ENCODE measurements at regions of chr6 and their contacts with region 1.

Region 1: DNA sequence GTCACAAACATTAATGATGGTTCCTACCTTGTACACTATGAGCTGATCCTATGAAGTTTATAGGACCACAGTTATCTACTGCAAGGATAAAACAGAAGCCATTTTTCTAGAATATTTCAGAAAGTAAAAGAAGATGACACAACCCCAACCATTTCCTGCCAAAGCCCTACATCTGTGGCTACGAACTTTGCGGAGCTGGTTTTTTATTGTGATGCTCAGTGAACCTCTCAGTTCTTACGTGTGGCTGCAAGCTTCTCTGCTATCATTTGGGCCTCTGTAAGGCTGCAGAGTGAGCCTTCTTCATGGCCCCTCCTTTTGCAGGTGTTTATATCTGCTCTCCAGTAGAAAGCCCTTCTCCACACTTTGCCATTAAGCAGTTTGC is 17.8 kb upstream of the TAGAP start:
- DNase-seq: peak; percentile 73
- ATAC-seq: peak; percentile 77
- H3K4me3 Mint-ChIP-seq: peak overlapping the region; percentile 35
- H3K27ac Mint-ChIP-seq: peak overlapping the region; percentile 94
- H3K4me1 Mint-ChIP-seq: peaks cover 99% of the 10 kb centered on the region
- H3K27me3 Mint-ChIP-seq: no peaks in the 10 kb centered on the region

Region 2: DNA sequence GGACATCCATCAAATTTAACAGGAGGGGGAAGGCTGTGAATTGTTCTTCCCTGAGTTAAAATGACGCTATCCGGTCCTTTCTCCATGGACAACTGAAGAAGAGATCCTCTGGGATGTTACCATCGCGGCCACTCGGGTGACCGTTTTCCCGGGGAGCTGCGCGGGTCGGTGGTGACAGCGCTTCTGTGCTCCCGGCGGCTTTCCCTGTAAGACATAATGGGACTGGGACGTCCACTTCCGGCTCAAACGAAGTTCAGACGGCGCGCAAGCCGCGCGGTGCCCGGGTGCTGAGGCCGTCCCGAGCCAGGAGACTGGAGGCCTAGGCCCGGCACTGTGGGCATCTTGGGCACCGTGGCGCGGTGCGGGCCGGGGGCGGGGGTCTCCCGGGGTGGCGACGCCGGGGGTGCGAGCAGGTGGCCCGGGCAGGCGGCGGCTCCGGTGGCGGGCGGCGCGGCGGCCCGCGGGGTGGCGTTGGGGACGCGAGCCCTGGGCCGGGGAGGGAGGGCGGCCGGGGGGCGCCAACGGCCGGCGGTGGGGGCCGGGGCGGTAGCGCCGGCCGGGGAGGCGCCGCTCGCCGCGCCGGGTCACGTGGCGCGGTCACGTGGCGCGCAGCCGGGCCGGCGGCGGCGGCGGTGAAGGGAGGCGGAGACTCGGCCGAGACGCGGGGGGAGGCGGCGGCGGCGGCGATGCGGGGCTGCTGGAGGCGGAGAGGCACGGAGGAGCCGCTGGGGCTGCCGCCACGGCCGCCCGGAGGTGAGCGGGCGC is 830.8 kb before region 1 on chr6:
- CTCF ChIA-PET with region 1: no interaction called
- POLR2A ChIA-PET with region 1: no interaction called
- intact Hi-C with region 1: no loop called
- DNase-seq: peak; percentile 83
- ATAC-seq: peak; percentile 79
- H3K4me3 Mint-ChIP-seq: peak overlapping the region; percentile 86
- H3K27ac Mint-ChIP-seq: peak overlapping the region; percentile 88
- H3K4me1 Mint-ChIP-seq: peaks cover 30% of the 10 kb centered on the region
- H3K27me3 Mint-ChIP-seq: no peaks in the 10 kb centered on the region

Region 3: DNA sequence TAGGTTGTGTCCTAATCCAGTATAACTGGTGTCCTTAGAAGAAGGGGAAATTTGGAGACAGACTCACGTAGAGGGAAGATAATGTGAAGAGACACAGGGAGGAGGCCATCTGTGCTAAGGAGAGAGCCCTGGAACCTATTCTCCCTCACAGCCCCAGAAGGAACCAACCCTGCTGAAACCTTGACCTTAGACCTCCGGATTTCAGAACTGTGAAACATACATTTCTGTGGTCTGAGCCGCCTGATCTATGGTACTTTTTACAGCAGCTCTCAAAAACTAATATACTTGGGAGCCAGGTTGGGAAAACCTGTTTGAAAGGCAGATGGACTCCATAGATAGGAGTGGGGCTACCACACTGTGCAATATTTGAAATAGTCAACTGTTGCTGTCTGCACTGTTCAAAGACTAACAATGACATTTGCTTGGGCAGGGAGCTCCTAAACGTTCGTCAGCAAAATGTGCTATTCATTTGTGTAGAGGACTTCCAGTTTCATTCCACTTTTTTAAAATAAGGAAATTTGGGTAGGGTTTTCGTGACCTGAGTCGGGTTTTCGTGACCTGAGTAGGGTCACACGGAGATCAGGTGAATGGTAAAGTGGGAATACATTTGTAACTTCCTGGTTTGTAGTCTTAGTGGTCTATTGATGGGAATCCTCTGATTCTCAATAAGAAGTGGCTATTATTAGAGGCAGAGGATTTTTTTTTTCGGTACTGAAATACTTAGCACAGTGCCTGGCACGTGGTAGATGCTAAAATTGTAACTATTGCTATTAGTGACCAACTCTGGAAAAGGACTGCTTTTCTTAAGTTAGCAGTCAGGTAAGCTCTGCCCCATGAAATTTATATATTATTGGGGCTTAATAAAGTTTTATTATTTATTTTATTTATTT is 29.1 kb before region 1 on chr6:
- CTCF ChIA-PET with region 1: no interaction called
- POLR2A ChIA-PET with region 1: no interaction called
- intact Hi-C with region 1: no loop called
- DNase-seq: no peak
- ATAC-seq: no peak
- H3K4me3 Mint-ChIP-seq: no peak overlapping the region
- H3K27ac Mint-ChIP-seq: no peak overlapping the region
- H3K4me1 Mint-ChIP-seq: peaks cover 39% of the 10 kb centered on the region
- H3K27me3 Mint-ChIP-seq: no peaks in the 10 kb centered on the region

Region 4: DNA sequence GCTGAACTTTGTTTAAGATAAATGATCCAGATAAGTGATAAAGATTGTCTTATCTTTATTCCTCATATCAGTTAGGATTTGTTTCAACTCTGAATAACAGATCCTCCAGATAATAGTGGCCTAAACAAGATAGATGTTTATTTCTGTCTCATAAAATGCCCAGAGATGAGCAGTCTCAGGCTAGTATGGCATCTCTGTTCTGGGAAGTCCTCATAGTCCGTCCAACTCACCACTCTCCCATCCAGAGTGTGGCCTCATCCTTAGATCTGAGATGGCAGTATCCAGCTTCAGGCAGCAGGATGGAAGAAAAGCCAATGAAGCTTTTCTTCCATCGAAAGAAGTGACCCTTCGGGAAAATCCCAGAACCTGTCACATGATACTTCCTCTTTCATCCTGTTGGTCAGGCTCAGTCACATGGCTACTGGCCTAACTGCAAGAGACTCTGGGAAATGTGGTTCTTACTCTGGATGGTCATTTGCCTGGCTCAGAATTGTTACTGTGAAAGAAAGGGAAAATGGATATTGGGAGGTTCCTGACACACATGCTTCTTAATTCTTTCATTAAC is 11.6 kb after region 1 on chr6:
- CTCF ChIA-PET with region 1: interaction called, 4 read pairs
- POLR2A ChIA-PET with region 1: interaction called, 5 read pairs
- intact Hi-C with region 1: loop called in 1 of 2 experiments (anchors 2 kb)
- DNase-seq: no peak
- ATAC-seq: no peak
- H3K4me3 Mint-ChIP-seq: no peak overlapping the region
- H3K27ac Mint-ChIP-seq: no peak overlapping the region
- H3K4me1 Mint-ChIP-seq: peaks cover 42% of the 10 kb centered on the region
- H3K27me3 Mint-ChIP-seq: no peaks in the 10 kb centered on the region

Region 5: GRCh38 chr6:159461256-159461655 is 398.7 kb after region 1 on chr6:
- CTCF ChIA-PET with region 1: no interaction called
- POLR2A ChIA-PET with region 1: no interaction called
- intact Hi-C with region 1: no loop called
- DNase-seq: no peak
- ATAC-seq: no peak
- H3K4me3 Mint-ChIP-seq: no peak overlapping the region
- H3K27ac Mint-ChIP-seq: no peak overlapping the region
- H3K4me1 Mint-ChIP-seq: no peaks in the 10 kb centered on the region
- H3K27me3 Mint-ChIP-seq: peaks cover 7% of the 10 kb centered on the region